Activated B cell treated with CpG ODN at 0.5 μM for 24 hours (primary cell): ENCODE measurements at regions of chr6 and their contacts with region 1.

Region 1: DNA sequence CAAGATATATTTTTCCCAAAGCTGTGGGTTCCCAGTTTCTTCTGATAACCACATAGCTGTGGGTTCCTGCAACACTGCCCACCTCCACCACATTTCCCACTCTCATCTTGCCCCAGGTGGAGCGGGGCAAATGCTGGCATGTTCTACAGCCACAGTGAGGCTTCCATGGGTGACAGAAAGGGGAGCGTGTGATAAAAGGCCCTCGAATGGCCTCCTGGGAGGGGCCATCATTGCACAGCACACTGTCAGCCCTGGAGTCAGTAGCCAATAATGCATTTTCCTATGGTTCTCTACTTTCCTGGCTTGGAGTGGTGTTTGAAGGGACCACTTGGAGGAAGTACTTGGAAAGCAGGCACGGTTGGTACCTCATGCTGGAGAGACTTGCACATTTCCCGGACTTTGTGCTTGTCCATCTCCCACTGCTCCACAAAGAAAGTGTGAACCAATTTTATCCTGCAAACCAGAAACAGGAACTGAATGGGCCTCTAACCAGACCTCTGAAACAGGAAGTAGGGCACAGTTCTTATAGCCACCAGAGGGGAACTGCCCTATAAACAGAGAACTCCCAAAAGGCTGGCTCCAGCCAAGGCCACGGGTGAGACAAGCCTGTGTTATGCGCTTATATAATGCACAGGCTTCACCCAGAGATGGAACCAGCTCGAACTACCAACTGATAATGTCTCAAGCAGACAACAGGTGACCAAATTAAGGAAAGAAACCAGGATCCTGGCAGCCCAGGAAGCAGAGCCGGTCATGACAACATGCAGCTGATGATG is 8.6 kb downstream of the MAP3K5 start:
- DNase-seq: peak; percentile 39
- ATAC-seq: peak; percentile 95
- H3K4me3 Mint-ChIP-seq: peak overlapping the region; percentile 85
- H3K27ac Mint-ChIP-seq: peak overlapping the region; percentile 93
- H3K4me1 Mint-ChIP-seq: peaks cover 80% of the 10 kb centered on the region
- H3K27me3 Mint-ChIP-seq: no peaks in the 10 kb centered on the region
- CTCF ChIP-seq: no peak

Region 2: GRCh38 chr6:136751522-136751956 is 32.1 kb before region 1 on chr6:
- CTCF ChIA-PET with region 1: no interaction called
- POLR2A ChIA-PET with region 1: interaction called, 13 read pairs
- intact Hi-C with region 1: no loop called
- DNase-seq: no peak
- ATAC-seq: peak; percentile 93
- H3K4me3 Mint-ChIP-seq: peak overlapping the region; percentile 60
- H3K27ac Mint-ChIP-seq: peak overlapping the region; percentile 82
- H3K4me1 Mint-ChIP-seq: peaks cover 63% of the 10 kb centered on the region
- H3K27me3 Mint-ChIP-seq: no peaks in the 10 kb centered on the region
- CTCF ChIP-seq: no peak

Region 3: DNA sequence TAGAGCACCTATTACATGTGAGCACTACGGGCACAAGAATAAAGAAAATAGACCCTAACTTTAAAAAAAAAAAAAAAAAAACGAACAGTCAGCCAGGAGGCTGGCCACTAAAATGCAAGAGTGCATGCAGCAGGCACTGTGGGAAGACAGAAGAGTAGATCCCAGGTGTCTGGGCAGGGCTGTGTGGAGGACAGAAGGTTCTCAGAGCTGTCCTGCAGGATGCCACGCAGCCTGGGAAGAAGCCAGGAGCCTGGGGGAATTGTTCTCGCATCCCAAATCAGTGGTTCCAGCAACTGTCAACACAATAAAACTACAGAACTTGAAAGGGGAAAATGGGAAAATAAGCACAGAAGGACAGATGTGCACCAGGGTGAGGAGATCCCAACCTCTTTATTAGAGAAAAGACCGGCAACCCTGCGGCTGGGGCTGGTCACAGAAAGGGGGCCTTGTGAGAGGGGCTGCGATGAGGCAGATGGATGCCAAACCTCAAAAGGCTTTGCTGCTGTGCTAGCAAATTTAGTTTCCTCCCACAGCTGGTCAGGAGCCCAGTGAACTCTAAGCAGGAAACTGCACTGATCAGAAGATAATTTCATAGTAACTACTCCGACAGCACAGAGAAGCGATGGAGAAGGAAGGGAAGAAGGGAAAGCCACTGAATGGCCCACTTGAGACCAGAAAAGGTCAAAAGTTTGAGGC is 22.3 kb before region 1 on chr6:
- CTCF ChIA-PET with region 1: no interaction called
- POLR2A ChIA-PET with region 1: interaction called, 96 read pairs
- intact Hi-C with region 1: loop called (anchors 1 kb)
- DNase-seq: no peak
- ATAC-seq: peak; percentile 26
- H3K4me3 Mint-ChIP-seq: peak overlapping the region; percentile 73
- H3K27ac Mint-ChIP-seq: peak overlapping the region; percentile 84
- H3K4me1 Mint-ChIP-seq: peaks cover 67% of the 10 kb centered on the region
- H3K27me3 Mint-ChIP-seq: no peaks in the 10 kb centered on the region
- CTCF ChIP-seq: no peak

Region 4: GRCh38 chr6:136772685-136773472 is 10.8 kb before region 1 on chr6:
- CTCF ChIA-PET with region 1: no interaction called
- POLR2A ChIA-PET with region 1: interaction called, 5 read pairs
- intact Hi-C with region 1: loop called (anchors 1 kb)
- DNase-seq: no peak
- ATAC-seq: peak; percentile 65
- H3K4me3 Mint-ChIP-seq: peak overlapping the region; percentile 45
- H3K27ac Mint-ChIP-seq: peak overlapping the region; percentile 76
- H3K4me1 Mint-ChIP-seq: peaks cover 73% of the 10 kb centered on the region
- H3K27me3 Mint-ChIP-seq: no peaks in the 10 kb centered on the region
- CTCF ChIP-seq: no peak

Region 5: DNA sequence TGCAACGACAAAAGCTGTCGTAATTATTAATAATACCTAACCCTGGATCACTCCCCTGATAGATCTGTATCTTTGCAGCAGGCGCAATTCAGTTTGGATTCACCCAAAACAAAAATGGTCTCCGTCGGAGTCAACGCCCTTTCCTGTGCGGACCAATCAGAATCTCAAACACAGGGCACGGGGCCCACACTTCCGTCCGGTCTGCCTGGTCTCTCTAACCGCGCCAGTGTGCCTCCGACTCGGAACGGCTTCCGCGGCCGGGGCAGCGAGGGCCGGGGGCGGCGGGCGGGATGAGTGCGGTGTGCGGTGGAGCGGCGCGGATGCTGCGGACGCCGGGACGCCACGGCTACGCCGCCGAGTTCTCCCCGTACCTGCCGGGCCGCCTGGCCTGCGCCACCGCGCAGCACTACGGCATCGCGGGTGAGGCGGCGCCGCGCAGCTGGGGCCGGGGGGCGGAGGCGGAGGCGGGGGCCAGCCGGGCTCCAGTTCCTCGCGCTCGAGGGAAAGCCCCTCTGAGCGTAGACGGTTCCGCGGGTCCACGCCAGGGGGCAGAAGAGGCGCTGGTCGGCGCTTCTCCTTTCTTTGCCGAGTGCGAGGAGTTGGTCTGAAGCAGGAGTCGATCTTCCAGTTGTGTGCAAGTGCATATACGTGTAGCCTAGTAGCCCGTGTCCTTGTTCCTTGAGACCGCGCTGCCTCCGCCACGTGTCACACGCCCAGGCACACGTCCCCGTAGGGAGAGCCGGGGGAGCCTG is 38.9 kb after region 1 on chr6 and contains the start of gene PEX7:
- CTCF ChIA-PET with region 1: no interaction called
- POLR2A ChIA-PET with region 1: no interaction called
- intact Hi-C with region 1: loop called (anchors 5 kb)
- DNase-seq: peak; percentile 86
- ATAC-seq: peak; percentile 91
- H3K4me3 Mint-ChIP-seq: peak within 1 kb of the TSS; percentile 94
- H3K27ac Mint-ChIP-seq: peak within 1 kb of the TSS; percentile 98
- H3K4me1 Mint-ChIP-seq: peaks cover 16% of the 10 kb centered on the region
- H3K27me3 Mint-ChIP-seq: peaks cover 4% of the 10 kb centered on the region
- CTCF ChIP-seq: no peak
- total RNA-seq, gene PEX7: 5.0 and 6.8 TPM in 2 replicates